Right cardiac atrium (tissue), 5 donors: ENCODE measurements at regions of chr20 and their contacts with region 1.

Region 1: GRCh38 chr20:5100684-5101347 is 18.9 kb downstream of the PCNA start:
- DNase-seq: peak; percentile 69 to 91 (median 85)
- ATAC-seq: peak; percentile 80 to 81
- H3K4me3 ChIP-seq: no peak overlapping the region
- H3K27ac ChIP-seq: no peak overlapping the region
- H3K4me1 ChIP-seq: no peaks in the 10 kb centered on the region
- H3K27me3 ChIP-seq: no peaks in the 10 kb centered on the region

Region 2: DNA sequence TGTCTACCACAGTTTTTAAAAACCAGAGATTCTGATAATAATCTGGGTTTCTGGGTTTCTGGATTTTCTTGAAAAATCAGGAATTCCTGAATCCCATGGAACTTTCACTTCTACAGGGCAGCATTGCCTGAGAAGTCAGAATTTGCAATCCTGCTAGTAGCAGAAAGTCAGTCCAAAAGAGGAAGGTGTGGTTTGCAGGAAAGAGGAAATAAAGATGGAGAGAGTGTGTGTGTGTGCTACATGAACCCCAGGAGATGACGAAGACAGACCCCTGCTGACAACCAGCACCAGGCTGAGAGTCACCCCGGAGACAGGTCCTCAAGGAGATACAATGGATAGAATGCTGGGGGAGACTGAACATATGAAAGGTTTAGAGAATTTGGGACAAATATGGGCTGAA is 334.2 kb before region 1 on chr20:
- intact Hi-C with region 1: loop called in 1 of 4 experiments (anchors 5 kb)
- DNase-seq: peak in 1 of 3 donors; percentile 18
- ATAC-seq: no peak
- H3K4me3 ChIP-seq: no peak overlapping the region
- H3K27ac ChIP-seq: no peak overlapping the region
- H3K4me1 ChIP-seq: no peaks in the 10 kb centered on the region
- H3K27me3 ChIP-seq: no peaks in the 10 kb centered on the region

Region 3: DNA sequence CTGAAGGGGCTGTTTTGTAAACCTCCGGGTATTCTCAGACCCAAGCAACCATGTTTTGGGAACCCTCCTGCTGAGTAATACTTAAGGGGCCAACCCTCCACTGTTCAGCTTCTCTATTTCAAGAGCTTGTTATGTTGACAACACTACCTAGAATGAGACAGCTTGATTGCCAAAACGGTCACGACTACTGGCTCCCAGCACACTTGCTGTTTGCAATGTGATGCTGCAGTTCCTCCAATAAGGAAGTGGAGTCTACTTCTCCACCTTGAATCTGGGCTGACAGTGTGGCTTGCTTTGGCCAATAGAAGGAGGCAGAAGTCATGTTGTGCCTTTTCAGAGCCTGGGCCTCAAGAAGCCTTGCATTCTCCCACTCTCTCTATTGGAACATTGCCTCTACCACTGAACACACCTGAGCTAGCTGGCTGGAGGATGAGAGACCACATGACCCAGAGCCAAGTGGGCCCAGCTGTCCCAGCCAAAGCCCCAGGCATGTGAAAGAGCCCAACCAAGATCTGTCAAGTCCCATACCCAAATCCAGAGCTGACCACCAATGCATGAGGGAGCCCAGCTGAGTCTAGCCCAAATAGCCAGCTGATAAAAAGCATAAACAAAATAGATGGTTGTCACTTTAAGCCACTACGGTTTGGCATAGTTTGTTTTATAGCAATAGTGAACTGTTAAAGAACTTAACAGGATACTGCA is 271.2 kb before region 1 on chr20:
- intact Hi-C with region 1: no loop called
- DNase-seq: no peak
- ATAC-seq: peak; percentile 59 to 78
- H3K4me3 ChIP-seq: no peak overlapping the region
- H3K27ac ChIP-seq: no peak overlapping the region
- H3K4me1 ChIP-seq: no peaks in the 10 kb centered on the region
- H3K27me3 ChIP-seq: no peaks in the 10 kb centered on the region

Region 4: DNA sequence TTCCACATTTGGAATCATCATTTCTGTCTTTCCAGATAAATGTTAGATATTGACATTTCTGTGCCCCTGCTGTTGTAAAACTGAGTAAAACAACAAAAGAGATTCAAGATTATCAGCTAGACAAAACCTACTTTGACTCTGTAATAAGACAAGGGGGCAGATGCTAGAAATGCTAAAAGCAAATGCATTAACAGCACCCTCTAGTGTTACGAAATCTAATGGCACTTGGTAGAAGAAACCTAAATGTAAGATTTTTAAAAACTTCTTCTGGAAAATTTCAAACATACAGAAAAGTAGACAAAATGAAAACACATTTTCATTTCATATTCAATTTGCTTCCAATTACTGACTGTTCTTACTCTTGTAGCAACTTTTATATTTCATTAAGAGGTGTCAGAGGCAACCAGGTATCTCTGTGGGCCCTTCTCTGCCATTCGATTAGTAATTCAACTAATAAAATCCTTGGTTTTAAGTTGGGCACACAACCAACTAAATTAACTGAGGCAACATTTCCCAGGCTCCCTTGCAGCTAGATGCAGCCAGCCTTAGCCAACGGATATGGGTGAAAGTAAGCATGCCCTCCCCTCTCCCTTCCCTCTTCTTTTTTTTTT is 144.5 kb before region 1 on chr20:
- intact Hi-C with region 1: loop called in 1 of 4 experiments (anchors 10 kb)
- DNase-seq: no peak
- ATAC-seq: peak; percentile 39 to 45
- H3K4me3 ChIP-seq: no peak overlapping the region
- H3K27ac ChIP-seq: no peak overlapping the region
- H3K4me1 ChIP-seq: peaks cover 2% of the 10 kb centered on the region
- H3K27me3 ChIP-seq: no peaks in the 10 kb centered on the region

Region 5: DNA sequence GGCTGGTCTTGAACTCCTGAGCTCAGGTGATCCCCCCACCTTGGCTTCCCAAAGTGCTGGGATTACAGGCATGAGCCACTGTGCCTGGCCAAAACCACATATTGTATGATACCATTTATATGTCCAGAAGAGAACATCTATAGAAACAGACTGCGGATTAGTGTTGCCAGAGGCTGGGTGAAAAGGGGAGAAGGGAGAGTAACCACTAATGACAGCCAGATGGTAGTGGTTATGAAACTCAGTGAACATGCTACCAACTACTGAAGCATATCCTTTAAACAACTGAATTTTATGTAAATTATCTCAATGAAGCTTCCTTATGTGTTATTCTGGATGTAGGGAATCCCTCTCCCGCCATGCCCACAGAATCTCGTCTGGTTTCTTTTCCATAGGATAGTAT is 115.2 kb before region 1 on chr20:
- intact Hi-C with region 1: no loop called
- DNase-seq: no peak
- ATAC-seq: no peak
- H3K4me3 ChIP-seq: no peak overlapping the region
- H3K27ac ChIP-seq: no peak overlapping the region
- H3K4me1 ChIP-seq: no peaks in the 10 kb centered on the region
- H3K27me3 ChIP-seq: no peaks in the 10 kb centered on the region

Region 6: GRCh38 chr20:5316188-5317158 is 215.7 kb after region 1 on chr20 and contains the start of gene PROKR2:
- intact Hi-C with region 1: no loop called
- DNase-seq: no peak
- ATAC-seq: peak; percentile 25 to 42
- H3K4me3 ChIP-seq: no peak within 1 kb of the TSS
- H3K27ac ChIP-seq: no peak within 1 kb of the TSS
- H3K4me1 ChIP-seq: no peaks in the 10 kb centered on the region
- H3K27me3 ChIP-seq: peaks cover 3% of the 10 kb centered on the region
- total RNA-seq, gene PROKR2: not detected